CD4-positive, alpha-beta memory T cell (primary cell): ENCODE measurements at regions of chr4 and their contacts with region 1.

Region 1: DNA sequence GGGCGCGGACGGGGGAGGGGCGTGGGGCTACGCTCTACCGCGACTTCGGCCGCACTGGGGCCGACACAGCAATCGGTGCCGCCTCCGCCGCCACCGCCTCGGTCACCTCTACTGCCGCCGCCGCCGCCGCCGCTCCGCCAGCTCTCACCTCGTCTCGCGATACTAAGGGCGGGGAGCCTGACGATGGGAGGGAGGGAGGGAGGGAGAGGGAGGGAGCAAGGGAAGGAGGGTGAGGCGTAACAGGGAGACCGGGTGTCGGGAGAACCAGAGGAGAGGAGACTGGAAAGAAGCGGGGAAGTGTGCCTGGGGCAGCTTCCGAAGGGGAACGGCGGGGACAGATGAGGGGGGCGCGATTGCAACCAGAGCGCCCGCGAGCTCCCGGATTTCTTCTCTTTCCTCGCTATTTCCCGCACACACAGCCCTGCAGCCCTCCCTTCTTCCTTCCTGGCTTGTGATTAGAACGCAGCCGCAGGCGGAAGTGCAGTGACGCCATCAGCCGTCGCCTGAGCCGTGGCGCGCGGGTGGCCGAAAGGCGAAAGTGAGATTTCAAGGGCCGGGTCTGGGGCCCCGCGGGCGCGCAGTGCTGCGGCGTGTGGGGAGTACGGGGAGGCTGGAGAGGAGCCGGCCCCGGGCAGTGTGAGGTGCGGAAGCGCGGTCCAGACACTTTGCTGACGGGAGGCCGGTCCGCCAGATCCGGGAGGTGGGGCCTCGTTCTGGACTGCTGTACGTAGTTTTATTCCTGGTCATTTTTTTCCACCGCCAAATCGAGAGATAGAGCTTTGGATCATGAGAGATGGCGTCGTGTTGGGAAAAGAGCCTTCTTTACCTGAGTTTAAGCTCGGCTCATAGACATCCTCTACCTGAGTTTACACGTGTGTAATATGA is at the start of gene ANKRD17:
- DNase-seq: peak; percentile 90 to 92 (median 92)
- H3K4me3 ChIP-seq: peak within 1 kb of the TSS; percentile 84 to 92
- H3K4me3 Mint-ChIP-seq: peak within 1 kb of the TSS; percentile 99 to 100 (median 100)
- H3K27ac ChIP-seq: peak within 1 kb of the TSS; percentile 94
- H3K27ac Mint-ChIP-seq: peak within 1 kb of the TSS; percentile 100
- H3K4me1 ChIP-seq: peaks cover 51% of the 10 kb centered on the region
- H3K4me1 Mint-ChIP-seq: peaks cover 37 to 81% (median 54%) of the 10 kb centered on the region in 4 donors
- H3K27me3 ChIP-seq: no peaks in the 10 kb centered on the region
- H3K27me3 Mint-ChIP-seq: no peaks in the 10 kb centered on the region
- total RNA-seq, gene ANKRD17: 58.4 to 58.7 TPM

Region 2: DNA sequence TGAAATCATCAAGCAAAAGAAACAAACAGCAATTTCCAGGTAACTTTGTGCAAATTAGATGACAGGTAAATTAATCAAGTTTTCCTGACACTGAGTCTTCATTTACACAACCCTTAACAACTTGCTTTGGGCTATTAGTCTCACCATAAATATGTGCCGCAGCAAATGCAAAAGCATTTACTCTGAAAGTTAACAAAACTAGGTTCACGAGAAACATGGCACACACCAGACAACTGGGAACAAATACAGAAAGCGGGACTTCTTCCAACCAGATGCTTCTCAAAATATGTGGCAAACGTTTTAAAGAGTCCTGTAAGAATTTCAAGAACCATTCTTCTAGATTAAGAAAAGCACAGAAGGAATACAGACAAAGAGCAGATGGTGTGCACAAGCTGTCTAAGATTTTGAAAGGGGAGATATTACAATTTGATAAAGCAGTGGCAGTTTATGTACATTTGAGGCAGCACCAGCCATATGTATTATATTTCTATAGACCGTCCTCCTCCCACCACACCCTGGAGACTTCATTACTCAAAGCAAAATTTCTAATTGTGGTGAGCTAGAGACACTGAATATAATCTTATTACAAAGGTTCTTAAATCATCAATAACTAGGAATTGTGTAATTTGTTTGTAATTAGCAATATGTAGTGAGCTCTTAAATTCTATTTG is 497.4 kb before region 1 on chr4:
- CTCF ChIA-PET with region 1: no interaction called
- POLR2A ChIA-PET with region 1: no interaction called
- intact Hi-C with region 1: no loop called
- DNase-seq: no peak
- H3K4me3 ChIP-seq: no peak overlapping the region
- H3K4me3 Mint-ChIP-seq: no peak overlapping the region
- H3K27ac ChIP-seq: no peak overlapping the region
- H3K27ac Mint-ChIP-seq: no peak overlapping the region
- H3K4me1 ChIP-seq: no peaks in the 10 kb centered on the region
- H3K4me1 Mint-ChIP-seq: no peaks in the 10 kb centered on the region
- H3K27me3 ChIP-seq: no peaks in the 10 kb centered on the region
- H3K27me3 Mint-ChIP-seq: no peaks in the 10 kb centered on the region

Region 3: DNA sequence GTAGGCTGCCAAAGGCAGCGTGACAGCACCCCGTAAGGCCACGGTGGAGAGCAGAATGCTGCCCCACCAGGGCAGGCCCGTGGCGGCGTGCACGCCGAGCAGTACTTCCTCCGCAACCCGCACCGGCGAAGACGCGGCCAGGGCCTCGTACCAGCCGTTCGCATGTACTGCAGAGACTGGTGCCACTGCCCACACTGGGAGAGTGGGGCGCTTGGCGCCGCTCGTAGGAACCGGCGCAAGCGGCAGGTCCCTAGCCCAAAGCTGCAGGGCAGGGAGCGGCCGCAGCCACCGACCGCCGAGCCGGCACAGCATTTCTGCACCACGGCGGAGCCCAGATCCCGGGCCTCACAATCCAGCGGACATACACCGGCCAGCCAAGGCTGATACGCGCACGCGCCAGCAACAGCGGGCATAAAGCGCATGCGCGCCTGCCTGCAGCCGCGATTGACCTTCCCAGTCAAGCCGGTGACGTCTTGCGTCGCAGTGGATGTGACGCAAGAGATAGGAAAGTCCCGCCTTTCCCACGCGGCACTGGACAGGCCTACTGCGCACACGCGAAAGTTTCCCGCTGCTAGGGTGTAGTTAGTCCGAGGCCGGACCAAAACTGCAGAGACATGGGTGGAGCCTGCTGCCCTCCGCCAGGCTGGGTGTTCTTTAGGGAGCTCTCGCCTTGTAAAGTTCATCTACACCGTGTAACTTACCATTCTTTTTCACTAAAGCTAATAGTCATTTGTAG is 189.4 kb before region 1 on chr4 and contains the start of gene COX18:
- CTCF ChIA-PET with region 1: interaction called, 24 read pairs
- POLR2A ChIA-PET with region 1: interaction called, 59 read pairs
- intact Hi-C with region 1: loop called (anchors 1 kb)
- DNase-seq: peak; percentile 94 to 96 (median 95)
- H3K4me3 ChIP-seq: peak within 1 kb of the TSS; percentile 89 to 93
- H3K4me3 Mint-ChIP-seq: peak within 1 kb of the TSS; percentile 88 to 94 (median 91)
- H3K27ac ChIP-seq: peak within 1 kb of the TSS; percentile 97
- H3K27ac Mint-ChIP-seq: peak within 1 kb of the TSS; percentile 94 to 100 (median 99)
- H3K4me1 ChIP-seq: peaks cover 27% of the 10 kb centered on the region
- H3K4me1 Mint-ChIP-seq: peaks cover 26 to 55% (median 37%) of the 10 kb centered on the region in 4 donors
- H3K27me3 ChIP-seq: no peaks in the 10 kb centered on the region
- H3K27me3 Mint-ChIP-seq: no peaks in the 10 kb centered on the region
- total RNA-seq, gene COX18: 14.4 to 14.6 TPM

Region 4: GRCh38 chr4:73142995-73143547 is 115.9 kb before region 1 on chr4:
- CTCF ChIA-PET with region 1: interaction called, 11 read pairs
- POLR2A ChIA-PET with region 1: interaction called, 4 read pairs
- intact Hi-C with region 1: loop called (anchors 2 kb)
- DNase-seq: peak in 1 of 5 donors; percentile 3
- H3K4me3 ChIP-seq: no peak overlapping the region
- H3K4me3 Mint-ChIP-seq: no peak overlapping the region
- H3K27ac ChIP-seq: no peak overlapping the region
- H3K27ac Mint-ChIP-seq: peak overlapping the region in 2 of 7 donors; percentile 63 to 78
- H3K4me1 ChIP-seq: no peaks in the 10 kb centered on the region
- H3K4me1 Mint-ChIP-seq: peaks cover 3 to 21% (median 5%) of the 10 kb centered on the region in 4 donors
- H3K27me3 ChIP-seq: no peaks in the 10 kb centered on the region
- H3K27me3 Mint-ChIP-seq: no peaks in the 10 kb centered on the region

Region 5: DNA sequence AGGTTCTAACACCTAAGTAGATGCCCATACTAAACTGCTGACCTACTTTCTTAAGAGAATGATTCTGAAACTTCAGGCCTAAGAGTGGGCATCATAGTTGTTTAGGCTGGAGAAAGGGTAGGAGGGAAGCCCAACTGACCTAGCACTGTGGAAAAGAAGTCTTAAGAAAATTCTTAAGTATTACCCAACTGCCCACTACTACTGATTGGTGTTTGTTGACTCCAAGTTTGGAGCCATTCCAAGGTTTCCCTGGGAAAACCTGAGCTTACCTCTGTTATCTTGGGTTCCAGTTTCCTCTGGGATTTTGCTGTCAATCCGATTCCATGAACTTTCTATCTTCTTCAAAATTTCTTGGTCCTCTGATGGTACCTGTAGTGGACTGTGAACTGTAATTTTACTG is 24.2 kb before region 1 on chr4:
- CTCF ChIA-PET with region 1: interaction called, 22 read pairs
- POLR2A ChIA-PET with region 1: no interaction called
- intact Hi-C with region 1: no loop called
- DNase-seq: no peak
- H3K4me3 ChIP-seq: no peak overlapping the region
- H3K4me3 Mint-ChIP-seq: no peak overlapping the region
- H3K27ac ChIP-seq: no peak overlapping the region
- H3K27ac Mint-ChIP-seq: peak overlapping the region in 3 of 7 donors; percentile 38 to 66 (median 47)
- H3K4me1 ChIP-seq: peaks cover 5% of the 10 kb centered on the region
- H3K4me1 Mint-ChIP-seq: peaks cover 30 to 54% (median 41%) of the 10 kb centered on the region in 4 donors
- H3K27me3 ChIP-seq: no peaks in the 10 kb centered on the region
- H3K27me3 Mint-ChIP-seq: no peaks in the 10 kb centered on the region

Region 6: DNA sequence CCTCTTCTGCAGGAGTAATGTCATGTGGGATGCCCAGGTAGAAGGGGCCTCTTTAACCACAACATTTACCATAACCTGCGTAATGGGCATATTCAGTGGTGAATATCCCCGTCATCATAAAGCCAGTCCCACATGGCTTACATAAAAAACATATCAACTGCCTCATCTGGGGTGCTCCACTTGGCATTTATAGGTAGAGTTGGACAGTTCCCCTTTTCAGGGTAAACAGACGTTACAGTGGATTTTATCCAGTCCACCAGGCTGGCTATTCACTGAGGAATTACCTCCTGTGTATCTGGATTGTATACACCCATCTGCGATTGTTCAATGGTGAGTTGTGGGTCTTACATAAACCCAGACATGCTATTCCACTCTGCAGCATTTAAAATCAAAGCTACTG is 70.4 kb after region 1 on chr4:
- CTCF ChIA-PET with region 1: no interaction called
- POLR2A ChIA-PET with region 1: no interaction called
- intact Hi-C with region 1: no loop called
- DNase-seq: no peak
- H3K4me3 ChIP-seq: no peak overlapping the region
- H3K4me3 Mint-ChIP-seq: no peak overlapping the region
- H3K27ac ChIP-seq: no peak overlapping the region
- H3K27ac Mint-ChIP-seq: no peak overlapping the region
- H3K4me1 ChIP-seq: no peaks in the 10 kb centered on the region
- H3K4me1 Mint-ChIP-seq: peaks cover 0 to 4% (median 0%) of the 10 kb centered on the region in 4 donors
- H3K27me3 ChIP-seq: no peaks in the 10 kb centered on the region
- H3K27me3 Mint-ChIP-seq: no peaks in the 10 kb centered on the region

Region 7: DNA sequence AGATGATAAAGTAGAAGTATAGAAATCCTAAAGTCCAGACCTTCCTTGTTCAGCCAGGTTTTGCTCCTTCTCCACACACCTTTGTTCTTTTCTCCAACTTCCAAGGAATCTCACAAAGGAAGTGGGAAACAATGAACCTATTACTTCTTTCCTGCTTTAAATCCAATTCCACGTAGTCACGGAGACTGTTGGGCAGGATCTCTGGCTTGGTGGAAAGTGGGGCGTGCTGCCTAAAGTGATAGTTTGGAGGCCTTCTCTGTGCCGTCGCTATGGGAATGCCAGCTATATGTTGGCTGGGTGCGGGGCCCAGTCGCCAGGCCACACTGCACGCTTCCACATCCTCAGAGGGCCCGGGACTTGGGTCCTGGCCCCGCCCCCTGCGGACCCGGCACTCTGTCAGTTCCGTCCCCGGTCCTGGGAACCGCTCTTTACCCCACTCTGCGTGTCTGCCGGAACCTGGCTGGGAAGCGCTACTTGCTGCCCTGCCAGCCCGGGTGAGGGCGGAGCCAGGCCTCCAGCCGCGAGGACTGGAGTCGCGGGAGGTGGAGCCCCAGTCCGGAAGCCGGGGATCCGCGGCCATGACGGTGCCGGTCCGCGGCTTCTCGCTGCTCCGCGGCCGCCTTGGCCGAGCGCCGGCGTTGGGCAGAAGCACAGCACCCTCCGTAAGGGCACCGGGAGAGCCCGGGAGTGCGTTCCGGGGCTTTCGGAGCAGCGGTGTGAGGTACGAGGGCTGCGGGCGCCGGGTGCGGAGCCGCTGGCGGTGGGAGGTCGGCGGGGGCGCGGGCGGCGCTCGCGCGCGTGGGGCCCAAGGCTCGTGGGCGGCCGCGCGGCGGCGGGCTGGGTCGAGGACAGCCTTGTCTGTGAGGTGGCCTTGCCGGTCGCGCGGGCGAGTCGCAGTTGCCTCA is 898.9 kb after region 1 on chr4 and contains the start of gene MTHFD2L:
- CTCF ChIA-PET with region 1: no interaction called
- POLR2A ChIA-PET with region 1: interaction called, 3 read pairs
- intact Hi-C with region 1: loop called (anchors 5 kb)
- DNase-seq: peak; percentile 72 to 81 (median 79)
- H3K4me3 ChIP-seq: peak within 1 kb of the TSS; percentile 55 to 58
- H3K4me3 Mint-ChIP-seq: peak within 1 kb of the TSS; percentile 89 to 95 (median 92)
- H3K27ac ChIP-seq: peak within 1 kb of the TSS; percentile 42
- H3K27ac Mint-ChIP-seq: peak within 1 kb of the TSS; percentile 49 to 95 (median 90)
- H3K4me1 ChIP-seq: peaks cover 17% of the 10 kb centered on the region
- H3K4me1 Mint-ChIP-seq: peaks cover 13 to 27% (median 17%) of the 10 kb centered on the region in 4 donors
- H3K27me3 ChIP-seq: no peaks in the 10 kb centered on the region
- H3K27me3 Mint-ChIP-seq: no peaks in the 10 kb centered on the region
- total RNA-seq, gene MTHFD2L: 7.5 to 7.6 TPM